Aorta (tissue), 5 donors: ENCODE measurements at regions of chr6 and their contacts with region 1.

Region 1: DNA sequence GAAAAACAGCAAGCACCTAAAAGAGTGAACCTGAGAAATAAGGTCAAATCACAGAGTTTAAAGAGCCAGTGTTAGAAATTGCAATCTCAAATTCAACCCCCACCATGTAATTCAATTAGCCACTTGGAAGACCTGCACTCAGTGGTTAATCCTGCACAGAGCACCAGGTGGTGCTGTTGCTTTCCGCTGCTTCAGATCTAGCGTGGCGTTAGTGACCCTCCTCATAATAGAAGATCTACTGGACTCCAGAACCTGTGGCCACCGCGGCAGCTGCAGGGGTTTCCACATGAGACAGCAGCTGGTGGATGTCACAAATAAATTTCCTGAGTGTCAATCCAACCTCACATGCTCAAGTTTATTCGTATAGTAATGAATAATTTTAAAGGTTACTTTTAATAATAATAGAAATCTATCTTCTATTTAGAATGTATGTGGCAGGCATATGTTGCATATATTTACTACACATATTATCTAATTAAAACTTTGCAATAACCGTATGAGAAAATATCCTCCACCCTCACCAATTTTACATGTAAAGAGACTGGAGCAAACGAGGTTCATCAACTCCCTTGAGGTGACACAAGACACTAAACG is 84.4 kb downstream of the SYNE1 start:
- DNase-seq: peak; percentile 64 to 84
- ATAC-seq: peak; percentile 88
- H3K4me3 ChIP-seq: no peak overlapping the region
- H3K27ac ChIP-seq: no peak overlapping the region
- H3K4me1 ChIP-seq: no peaks in the 10 kb centered on the region
- H3K27me3 ChIP-seq: no peaks in the 10 kb centered on the region

Region 2: DNA sequence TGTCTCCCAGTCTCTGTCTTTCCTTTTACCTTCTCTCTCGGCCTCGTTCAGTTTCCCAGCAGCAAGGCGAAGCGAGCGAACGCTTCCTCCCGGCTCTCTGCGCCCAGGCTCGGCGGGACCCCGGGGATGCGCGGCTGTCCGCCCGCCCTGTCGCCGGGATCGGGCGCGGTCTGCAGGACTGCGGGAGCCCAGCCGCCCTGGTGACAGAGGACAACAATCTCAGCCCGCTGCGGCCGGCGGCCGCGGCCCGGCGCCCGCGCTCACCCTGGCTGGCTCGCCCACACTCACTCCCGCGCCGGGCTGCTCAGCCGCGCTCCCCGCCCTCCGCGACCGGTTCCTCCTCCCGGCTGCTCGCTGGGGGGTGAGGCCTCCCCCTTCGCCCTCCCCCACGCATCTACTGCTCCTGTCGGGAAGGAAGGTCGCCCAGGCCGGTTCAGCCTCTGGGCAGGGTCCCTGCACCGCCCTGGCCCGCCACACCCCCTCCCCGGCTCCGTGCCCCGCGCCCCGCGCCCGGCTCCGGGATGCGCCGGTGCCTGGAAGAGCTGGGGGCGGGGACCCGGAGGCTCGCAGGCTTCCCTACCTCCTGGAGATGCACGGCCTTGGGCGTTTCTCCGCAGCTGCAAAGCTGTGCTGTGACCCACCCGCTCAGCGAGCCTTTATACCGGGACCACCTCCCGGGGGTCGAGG is 84.0 kb after region 1 on chr6:
- intact Hi-C with region 1: loop called in 1 of 2 experiments (anchors 5 kb)
- DNase-seq: peak; percentile 47 to 82
- ATAC-seq: peak; percentile 85
- H3K4me3 ChIP-seq: peak overlapping the region; percentile 56 to 61
- H3K27ac ChIP-seq: no peak overlapping the region
- H3K4me1 ChIP-seq: no peaks in the 10 kb centered on the region
- H3K27me3 ChIP-seq: no peaks in the 10 kb centered on the region

Region 3: GRCh38 chr6:152669895-152670294 is 117.2 kb after region 1 on chr6:
- intact Hi-C with region 1: loop called in 1 of 2 experiments (anchors 10 kb)
- DNase-seq: no peak
- ATAC-seq: no peak
- H3K4me3 ChIP-seq: no peak overlapping the region
- H3K27ac ChIP-seq: no peak overlapping the region
- H3K4me1 ChIP-seq: no peaks in the 10 kb centered on the region
- H3K27me3 ChIP-seq: no peaks in the 10 kb centered on the region

Region 4: DNA sequence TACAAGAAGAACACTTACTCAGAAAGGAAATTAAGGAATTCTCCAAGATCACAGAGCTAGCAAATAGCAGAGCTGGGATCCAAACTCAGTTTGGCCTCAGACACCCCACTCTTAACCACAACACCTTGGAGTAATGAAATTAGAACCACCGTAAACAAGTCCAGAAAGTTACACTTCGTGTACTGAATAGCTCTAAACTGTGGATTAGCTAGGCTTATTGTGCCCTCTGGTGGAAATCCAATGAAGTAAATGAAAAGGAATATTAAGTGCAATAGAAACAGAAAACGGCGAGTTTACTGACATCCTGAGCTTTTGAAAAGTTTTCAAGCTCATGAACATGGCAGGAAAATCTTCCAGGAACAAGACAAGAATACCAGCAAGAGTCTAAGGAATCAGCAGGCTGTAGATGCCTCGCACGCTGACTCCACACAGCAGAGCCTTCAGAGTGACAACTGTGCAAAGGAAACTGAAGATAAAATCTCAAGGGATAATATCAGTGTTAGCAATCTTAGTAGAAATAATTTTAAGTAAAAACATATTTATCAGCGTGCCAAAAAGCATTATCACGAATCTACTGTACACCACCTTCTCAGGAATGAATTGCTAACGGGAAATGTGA is 395.5 kb after region 1 on chr6:
- intact Hi-C with region 1: loop called in 1 of 2 experiments (anchors 5 kb)
- DNase-seq: no peak
- ATAC-seq: peak; percentile 76
- H3K4me3 ChIP-seq: peak overlapping the region; percentile 26 to 47
- H3K27ac ChIP-seq: no peak overlapping the region
- H3K4me1 ChIP-seq: no peaks in the 10 kb centered on the region
- H3K27me3 ChIP-seq: no peaks in the 10 kb centered on the region